K562 (cell line): ENCODE measurements at regions of chr6 and their contacts with region 1.

Region 1: DNA sequence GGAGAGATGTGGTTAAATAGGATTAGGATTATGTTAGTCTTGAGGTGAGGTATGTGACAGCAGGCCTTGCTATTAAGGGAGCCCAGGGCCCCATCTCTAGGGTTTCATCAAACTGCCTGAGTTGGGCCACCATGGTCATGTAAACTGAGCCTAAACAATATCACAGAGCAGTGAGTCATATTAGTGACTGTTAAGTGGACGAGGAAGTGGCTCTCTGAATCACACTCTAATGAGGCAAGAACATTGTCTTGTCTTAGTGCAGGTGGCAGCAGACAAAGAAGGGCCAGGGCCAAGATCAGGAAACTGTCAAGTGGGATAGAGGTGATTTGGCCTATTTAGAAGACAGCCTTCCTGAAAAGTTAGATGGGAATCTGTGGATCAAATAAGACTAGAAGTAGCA is 23.1 kb downstream of the ENPP3 start:
- DNase-seq: no peak
- ATAC-seq: peak; percentile 32; the same call in 2 of the 3 replicates
- H3K4me3 ChIP-seq: no peak overlapping the region
- H3K27ac ChIP-seq: 0 out of 3 replicates have a peak overlapping the region, but pooled peaks have one; percentile 17
- H3K4me1 ChIP-seq: peaks cover 4 to 30% of the 10 kb centered on the region in 2 experiments
- H3K27me3 ChIP-seq: no peaks in the 10 kb centered on the region
- CTCF ChIP-seq: no peak
- EP300 ChIP-seq: no peak
- POLR2A ChIP-seq: no peak
- RAD21 ChIP-seq: no peak

Region 2: DNA sequence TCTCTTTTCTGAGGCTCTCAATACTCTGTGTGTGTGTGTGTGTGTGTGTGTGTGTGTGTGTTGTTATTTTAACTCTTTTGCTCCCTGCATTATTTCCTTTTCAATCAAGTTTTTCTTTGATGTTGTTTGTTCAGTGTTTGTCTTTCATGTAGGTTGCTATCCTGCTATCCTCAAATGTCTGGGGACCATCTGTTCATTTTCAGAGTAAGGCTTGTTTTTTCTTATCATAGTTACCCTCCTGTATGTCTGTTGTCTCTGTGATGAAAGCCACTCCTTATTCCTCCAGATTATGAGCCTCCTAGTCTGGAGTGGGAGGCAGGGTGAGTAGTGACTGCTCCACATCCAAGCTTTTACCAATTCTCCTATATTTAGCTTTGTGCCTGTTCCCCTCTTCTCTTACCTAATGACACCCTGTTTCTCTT is 13.9 kb before region 1 on chr6:
- CTCF ChIA-PET with region 1: no interaction called
- POLR2A ChIA-PET with region 1: interaction called, 10 read pairs
- in situ Hi-C with region 1: no loop called
- intact Hi-C with region 1: no loop called
- DNase-seq: peak; percentile 72 to 88 (median 76)
- ATAC-seq: peak; percentile 89
- H3K4me3 ChIP-seq: peak overlapping the region; percentile 22
- H3K27ac ChIP-seq: peak overlapping the region; percentile 78
- H3K4me1 ChIP-seq: peaks cover 16 to 56% of the 10 kb centered on the region in 2 experiments
- H3K27me3 ChIP-seq: no peaks in the 10 kb centered on the region
- CTCF ChIP-seq: no peak
- EP300 ChIP-seq: peak; percentile 89
- POLR2A ChIP-seq: peak; percentile 55; the same call in 1 of the 2 replicates
- RAD21 ChIP-seq: no peak

Region 3: DNA sequence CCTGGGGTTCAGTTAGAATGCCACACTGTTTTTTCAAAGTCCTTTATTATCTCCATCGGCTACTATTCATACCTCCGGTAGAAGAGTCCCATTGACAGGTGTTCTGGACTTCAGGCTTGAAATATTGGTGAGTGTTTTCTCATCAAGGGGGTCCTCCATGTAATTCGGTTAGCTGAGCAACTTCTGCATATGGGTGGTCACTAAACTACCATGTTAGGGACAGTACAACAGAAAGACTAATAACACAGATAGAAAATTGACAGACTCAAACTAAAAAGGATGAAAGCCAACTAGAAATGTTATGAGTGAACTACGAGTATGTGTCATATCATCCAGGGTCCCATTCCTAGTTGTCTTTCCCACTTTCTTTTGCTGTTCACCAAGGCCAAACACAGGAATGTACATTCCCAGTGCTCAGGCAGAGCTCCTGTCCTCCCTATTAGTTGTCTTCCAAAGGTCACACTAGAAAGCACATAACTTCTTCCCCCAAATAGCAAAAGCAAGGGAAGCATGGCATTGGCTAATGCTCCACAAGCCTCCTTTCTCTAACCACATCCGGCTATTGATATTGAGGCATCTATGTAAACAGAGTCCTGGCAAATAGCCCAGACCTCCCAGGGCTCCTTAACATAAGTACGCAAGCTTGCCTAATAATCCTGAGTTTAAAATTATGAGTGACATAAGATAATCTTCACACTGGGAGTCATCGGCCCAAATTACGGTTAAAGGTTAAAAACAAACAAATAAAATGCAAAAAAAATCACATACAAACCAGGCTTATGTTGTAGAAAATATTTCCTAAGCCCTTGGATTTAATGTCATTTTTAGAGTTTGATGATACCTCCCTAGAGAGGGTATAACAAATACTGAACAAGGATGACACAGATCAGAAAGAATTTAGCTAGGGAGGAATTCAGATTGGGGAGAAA is 277.8 kb after region 1 on chr6:
- CTCF ChIA-PET with region 1: no interaction called
- POLR2A ChIA-PET with region 1: no interaction called
- in situ Hi-C with region 1: no loop called
- intact Hi-C with region 1: no loop called
- DNase-seq: no peak
- ATAC-seq: no peak
- H3K4me3 ChIP-seq: no peak overlapping the region
- H3K27ac ChIP-seq: no peak overlapping the region
- H3K4me1 ChIP-seq: no peaks in the 10 kb centered on the region
- H3K27me3 ChIP-seq: no peaks in the 10 kb centered on the region
- CTCF ChIP-seq: no peak
- EP300 ChIP-seq: no peak
- POLR2A ChIP-seq: no peak
- RAD21 ChIP-seq: no peak

Region 4: GRCh38 chr6:132320007-132320406 is 659.8 kb after region 1 on chr6:
- CTCF ChIA-PET with region 1: no interaction called
- POLR2A ChIA-PET with region 1: no interaction called
- in situ Hi-C with region 1: no loop called
- intact Hi-C with region 1: no loop called
- DNase-seq: no peak
- ATAC-seq: no peak
- H3K4me3 ChIP-seq: no peak overlapping the region
- H3K27ac ChIP-seq: no peak overlapping the region
- H3K4me1 ChIP-seq: no peaks in the 10 kb centered on the region
- H3K27me3 ChIP-seq: no peaks in the 10 kb centered on the region
- CTCF ChIP-seq: no peak
- EP300 ChIP-seq: no peak
- POLR2A ChIP-seq: no peak
- RAD21 ChIP-seq: no peak